Esophagus muscularis mucosa (tissue), 4 donors: ENCODE measurements at regions of chr4 and their contacts with region 1.

Region 1: GRCh38 chr4:271492-272103 is 33.7 kb downstream of the ZNF732 start:
- DNase-seq: no peak
- H3K4me3 ChIP-seq: no peak overlapping the region
- H3K27ac ChIP-seq: no peak overlapping the region
- H3K4me1 ChIP-seq: no peaks in the 10 kb centered on the region
- H3K27me3 ChIP-seq: no peaks in the 10 kb centered on the region
- CTCF ChIP-seq: no peak
- EP300 ChIP-seq: no peak
- POLR2A ChIP-seq: no peak

Region 2: GRCh38 chr4:373062-373839 is 101.7 kb after region 1 on chr4:
- intact Hi-C with region 1: loop called (anchors 10 kb)
- DNase-seq: no peak
- H3K4me3 ChIP-seq: no peak overlapping the region
- H3K27ac ChIP-seq: no peak overlapping the region
- H3K4me1 ChIP-seq: no peaks in the 10 kb centered on the region
- H3K27me3 ChIP-seq: no peaks in the 10 kb centered on the region
- CTCF ChIP-seq: no peak
- EP300 ChIP-seq: no peak
- POLR2A ChIP-seq: no peak

Region 3: GRCh38 chr4:385934-386707 is 114.5 kb after region 1 on chr4:
- intact Hi-C with region 1: no loop called
- DNase-seq: no peak
- H3K4me3 ChIP-seq: no peak overlapping the region
- H3K27ac ChIP-seq: no peak overlapping the region
- H3K4me1 ChIP-seq: no peaks in the 10 kb centered on the region
- H3K27me3 ChIP-seq: no peaks in the 10 kb centered on the region
- CTCF ChIP-seq: no peak
- EP300 ChIP-seq: no peak
- POLR2A ChIP-seq: no peak